AG04450 (cell line): ENCODE measurements at regions of chr10 and their contacts with region 1.

Region 1: DNA sequence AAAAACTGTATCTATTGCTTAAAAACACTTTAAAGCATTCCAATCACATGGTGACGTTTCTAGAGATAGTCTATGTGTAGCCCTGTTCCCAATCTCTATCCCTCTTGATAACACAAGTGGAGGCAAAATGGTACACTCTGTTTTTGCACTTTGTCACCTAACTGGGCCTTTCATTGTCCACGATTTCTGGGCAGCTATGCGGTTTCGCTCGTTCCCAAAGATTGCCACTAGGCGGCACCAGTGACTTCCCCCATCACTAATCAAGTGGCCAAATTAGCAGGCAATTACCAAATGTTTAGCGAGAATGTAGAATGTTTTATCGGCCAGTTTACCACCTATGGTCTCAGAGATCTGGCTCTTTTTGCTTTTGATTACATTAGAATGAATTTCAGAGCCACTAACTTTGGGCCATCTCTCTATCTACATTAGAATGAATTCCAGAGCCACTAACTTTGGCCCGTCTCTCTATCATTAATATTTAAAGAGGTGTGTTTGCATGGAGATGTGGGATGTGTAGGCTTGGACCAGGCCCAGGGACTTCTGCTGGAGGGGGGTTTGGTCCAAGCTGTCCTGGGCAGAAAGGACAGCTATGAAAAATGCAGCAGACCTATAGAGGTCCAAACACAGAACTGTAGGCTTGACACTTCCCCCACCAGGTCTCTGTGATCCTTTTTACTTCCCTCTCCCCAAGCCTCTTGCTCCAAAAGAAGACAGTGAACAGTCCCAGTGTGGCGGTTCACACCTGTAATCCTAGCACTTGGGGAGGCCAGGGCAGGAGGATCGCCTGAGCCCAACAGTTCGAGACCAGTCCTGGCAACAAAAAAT is 90.1 kb downstream of the EPC1 start:
- DNase-seq: no peak
- H3K4me3 ChIP-seq: no peak overlapping the region
- H3K27ac ChIP-seq: no peak overlapping the region
- H3K27me3 ChIP-seq: no peaks in the 10 kb centered on the region
- CTCF ChIP-seq: peak; percentile 97

Region 2: DNA sequence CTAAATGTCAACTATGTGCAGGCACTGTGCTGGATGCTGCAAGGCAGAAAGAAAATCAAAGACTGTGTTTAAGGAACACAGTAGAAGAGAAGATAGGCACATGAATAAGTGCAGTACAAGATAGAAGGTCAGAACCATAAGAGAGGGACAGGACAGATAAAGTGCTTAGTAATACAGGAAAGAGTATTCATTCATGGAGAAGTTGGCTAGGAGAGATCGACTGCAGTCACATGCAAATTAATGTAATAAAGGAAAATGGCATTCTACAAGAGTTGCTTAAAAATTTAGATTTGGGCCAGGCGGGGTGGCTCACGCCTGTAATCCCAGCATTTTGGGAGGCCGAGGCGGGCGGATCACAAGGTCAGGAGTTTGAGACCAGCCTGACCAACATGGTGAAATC is 225.4 kb before region 1 on chr10:
- CTCF ChIA-PET with region 1: no interaction called
- POLR2A ChIA-PET with region 1: no interaction called
- DNase-seq: no peak
- H3K4me3 ChIP-seq: no peak overlapping the region
- H3K27ac ChIP-seq: no peak overlapping the region
- H3K27me3 ChIP-seq: no peaks in the 10 kb centered on the region
- CTCF ChIP-seq: no peak

Region 3: GRCh38 chr10:32190890-32191491 is 65.8 kb before region 1 on chr10:
- CTCF ChIA-PET with region 1: interaction called, 11 read pairs
- POLR2A ChIA-PET with region 1: interaction called, 6 read pairs
- DNase-seq: no peak
- H3K4me3 ChIP-seq: no peak overlapping the region
- H3K27ac ChIP-seq: no peak overlapping the region
- H3K27me3 ChIP-seq: no peaks in the 10 kb centered on the region
- CTCF ChIP-seq: peak; percentile 70

Region 4: GRCh38 chr10:32232378-32232777 is 24.4 kb before region 1 on chr10:
- CTCF ChIA-PET with region 1: no interaction called
- POLR2A ChIA-PET with region 1: no interaction called
- DNase-seq: no peak
- H3K4me3 ChIP-seq: no peak overlapping the region
- H3K27ac ChIP-seq: no peak overlapping the region
- H3K27me3 ChIP-seq: no peaks in the 10 kb centered on the region
- CTCF ChIP-seq: no peak

Region 5: DNA sequence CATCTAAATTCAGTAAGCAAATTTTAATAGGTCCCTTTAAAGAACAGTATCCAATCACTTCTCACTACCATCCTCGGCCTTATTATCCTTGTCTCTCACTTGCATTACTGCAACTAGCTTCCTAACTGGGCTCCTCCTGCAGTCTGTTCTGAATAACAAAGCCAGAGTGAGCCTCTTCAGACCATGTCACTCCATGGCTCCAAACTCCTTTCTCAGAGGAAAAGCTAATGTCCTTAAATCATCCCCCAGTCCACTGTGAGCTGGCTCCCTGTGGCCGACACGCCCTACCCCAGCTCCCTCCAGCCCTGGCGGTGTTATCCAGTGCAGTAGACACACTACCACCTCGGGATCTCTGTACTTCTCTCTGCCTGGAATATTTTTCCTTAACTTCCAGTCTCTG is 10.2 kb after region 1 on chr10:
- CTCF ChIA-PET with region 1: interaction called, 16 read pairs
- POLR2A ChIA-PET with region 1: interaction called, 7 read pairs
- DNase-seq: no peak
- H3K4me3 ChIP-seq: no peak overlapping the region
- H3K27ac ChIP-seq: no peak overlapping the region
- H3K27me3 ChIP-seq: no peaks in the 10 kb centered on the region
- CTCF ChIP-seq: no peak

Region 6: DNA sequence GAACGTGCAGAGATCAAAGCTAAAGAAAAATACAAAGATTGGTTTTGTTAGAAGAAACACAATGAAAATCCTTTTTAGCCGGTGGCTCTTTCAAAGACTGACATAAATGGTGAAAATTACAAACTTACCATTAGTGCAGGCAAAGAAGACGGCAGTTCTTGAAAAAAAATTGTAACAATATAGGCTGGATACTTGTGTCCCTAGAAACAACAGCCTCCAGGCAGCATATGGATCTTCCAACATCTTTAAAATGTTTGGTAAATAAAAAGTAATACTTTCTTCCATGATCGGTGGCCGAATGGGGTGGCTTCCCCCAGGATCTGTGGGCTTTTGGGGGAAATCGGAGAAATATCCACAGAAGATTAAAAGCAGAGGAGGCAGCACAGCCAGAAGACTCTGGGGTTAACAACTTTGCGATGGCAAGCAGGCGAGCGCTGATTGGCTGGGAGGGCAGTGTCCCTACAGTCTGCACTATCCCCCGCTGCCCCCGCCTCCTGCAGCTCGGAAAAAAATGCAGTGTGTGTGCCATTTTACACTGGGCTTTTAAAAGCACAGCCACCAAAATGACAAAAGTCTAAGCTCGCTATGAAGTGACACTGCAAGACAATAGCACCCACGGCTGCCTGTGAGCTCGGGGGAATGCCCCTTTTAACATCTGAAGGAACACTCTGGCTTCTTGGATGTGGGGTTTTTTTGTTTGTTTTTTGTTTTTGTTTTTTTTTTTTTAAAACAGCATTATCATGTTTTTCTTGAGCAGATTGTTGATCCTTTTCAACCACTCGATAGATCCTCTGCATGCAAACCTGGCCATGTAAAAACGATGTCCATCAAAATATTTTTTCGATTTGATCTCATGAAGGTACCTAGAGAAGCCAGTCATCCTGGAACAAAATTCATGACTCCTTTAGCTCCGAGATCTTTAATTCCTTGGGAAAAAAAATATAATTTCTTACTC is 121.8 kb after region 1 on chr10:
- CTCF ChIA-PET with region 1: interaction called, 17 read pairs
- POLR2A ChIA-PET with region 1: no interaction called
- DNase-seq: peak; percentile 54
- H3K4me3 ChIP-seq: peak overlapping the region; percentile 76
- H3K27ac ChIP-seq: no peak overlapping the region
- H3K27me3 ChIP-seq: no peaks in the 10 kb centered on the region
- CTCF ChIP-seq: no peak

Region 7: DNA sequence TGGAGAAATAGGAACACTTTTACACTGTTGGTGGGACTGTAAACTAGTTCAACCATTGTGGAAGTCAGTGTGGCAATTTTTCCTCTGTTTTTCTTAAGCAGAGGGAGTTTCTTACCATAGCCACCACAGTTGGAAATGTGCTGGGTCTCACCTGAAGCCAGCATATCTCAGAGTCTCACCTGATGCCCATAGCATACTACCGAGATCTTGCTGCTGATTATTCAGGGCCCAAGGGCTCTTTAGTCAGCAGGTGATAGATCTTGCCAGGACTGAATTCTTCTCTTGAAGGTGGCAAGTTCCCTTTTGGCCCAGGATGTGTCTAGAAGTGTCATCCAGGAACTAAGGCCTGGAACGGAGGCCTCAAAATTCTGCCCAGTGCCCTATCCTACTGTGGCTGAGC is 404.5 kb after region 1 on chr10:
- CTCF ChIA-PET with region 1: no interaction called
- POLR2A ChIA-PET with region 1: no interaction called
- DNase-seq: no peak
- H3K4me3 ChIP-seq: no peak overlapping the region
- H3K27ac ChIP-seq: no peak overlapping the region
- H3K27me3 ChIP-seq: no peaks in the 10 kb centered on the region
- CTCF ChIP-seq: no peak